Head of caudate nucleus (tissue), 42 donors: ENCODE measurements at regions of chr10 and their contacts with region 1.

Region 1: GRCh38 chr10:114103284-114103683 is 59.6 kb downstream of the ADRB1 start:
- DNase-seq: peak in 20 of 42 donors; percentile 7 to 71 (median 34)

Region 2: GRCh38 chr10:113704637-113705343 is 398.5 kb before region 1 on chr10:
- intact Hi-C with region 1: loop called (anchors 10 kb)
- DNase-seq: peak in 26 of 42 donors; percentile 15 to 76 (median 48)

Region 3: DNA sequence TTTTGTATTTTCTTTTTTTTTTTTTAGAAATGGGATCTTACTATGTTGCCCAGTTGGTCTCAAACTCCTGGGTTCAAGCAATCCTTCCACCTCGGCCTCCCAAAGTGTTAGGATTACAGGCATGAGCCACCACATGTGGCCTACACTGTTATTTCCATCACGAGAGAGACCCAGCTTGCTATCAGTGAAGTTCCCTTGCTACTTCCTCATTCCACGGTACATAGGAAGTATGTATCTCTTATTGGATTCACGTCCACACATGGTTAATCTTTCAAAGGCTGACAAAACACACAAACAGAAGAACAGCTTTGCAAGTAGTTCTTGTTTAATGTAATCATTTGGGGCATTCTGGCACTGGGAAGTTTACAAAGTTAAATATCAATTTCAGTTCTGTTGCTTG is 300.3 kb before region 1 on chr10:
- intact Hi-C with region 1: loop called (anchors 5 kb)
- DNase-seq: no peak

Region 4: DNA sequence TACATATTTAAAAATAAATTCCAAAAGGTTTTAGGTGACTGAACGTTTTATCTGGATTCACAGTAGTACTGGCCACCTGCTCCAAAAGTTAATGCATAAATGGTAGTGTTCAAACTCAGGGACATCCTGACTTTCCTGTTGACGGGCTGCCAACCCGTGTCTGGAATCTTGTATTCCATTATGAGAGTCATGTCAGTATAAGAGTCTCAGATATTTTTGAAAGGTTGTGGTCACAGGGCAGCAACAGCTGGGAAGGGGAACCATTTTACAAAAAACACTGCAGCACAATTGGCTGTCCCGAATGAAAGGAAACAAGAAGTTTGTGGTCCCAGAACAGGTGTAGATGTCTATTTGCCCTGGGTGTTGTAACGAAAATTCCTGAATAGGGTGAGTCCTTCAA is 78.7 kb after region 1 on chr10:
- intact Hi-C with region 1: no loop called
- DNase-seq: no peak